ENCODE measurements at regions of chr7 and their contacts with region 1.

Region 1: DNA sequence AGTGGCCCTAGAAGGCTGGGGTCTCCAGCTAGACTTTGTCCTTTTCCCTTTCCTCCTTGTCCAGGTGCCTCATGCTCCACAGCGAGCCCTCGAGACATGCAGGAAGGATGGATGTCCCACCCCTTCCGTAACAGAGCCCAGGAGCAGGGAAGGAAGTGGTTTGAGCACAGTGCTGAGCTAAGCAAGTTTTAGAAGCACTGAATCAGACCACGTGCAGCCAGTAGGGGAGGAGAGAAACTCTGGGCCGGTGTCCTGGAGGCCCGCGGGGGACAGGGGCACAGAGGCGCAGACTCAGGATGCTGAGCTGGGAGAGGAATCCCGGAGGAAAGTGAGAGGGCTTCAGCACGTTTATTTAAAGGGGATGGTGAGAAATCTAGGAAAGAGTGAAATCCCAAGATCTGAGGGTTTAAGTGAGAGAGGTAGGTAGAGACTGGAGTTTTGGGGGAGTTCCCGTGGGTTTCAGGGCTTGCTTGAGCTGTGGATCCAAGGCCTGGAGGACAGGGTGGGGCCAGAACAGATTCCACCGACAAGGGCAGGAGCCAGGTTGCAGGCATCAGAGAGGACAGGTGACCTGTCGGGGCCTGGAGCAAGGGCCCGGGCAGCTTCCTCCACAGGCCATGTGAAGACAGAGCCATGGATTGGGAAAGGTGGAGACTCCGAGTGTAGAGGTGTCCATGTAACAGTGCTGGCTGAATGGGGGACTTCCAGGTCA is 4.4 kb upstream of the IRF5 start:
- DNase-seq: peak; percentile 75
- H3K4me3 Mint-ChIP-seq: peak overlapping the region; percentile 70
- H3K27ac Mint-ChIP-seq: peak overlapping the region; percentile 77
- H3K4me1 Mint-ChIP-seq: peaks cover 26% of the 10 kb centered on the region
- H3K27me3 Mint-ChIP-seq: peaks cover 6% of the 10 kb centered on the region

Region 2: GRCh38 chr7:128830231-128831177 is 102.8 kb before region 1 on chr7 and contains the start of gene FLNC:
- CTCF ChIA-PET with region 1: no interaction called
- POLR2A ChIA-PET with region 1: no interaction called
- intact Hi-C with region 1: no loop called
- DNase-seq: peak; percentile 51
- H3K4me3 Mint-ChIP-seq: peak within 1 kb of the TSS; percentile 45
- H3K27ac Mint-ChIP-seq: no peak within 1 kb of the TSS
- H3K4me1 Mint-ChIP-seq: peaks cover 11% of the 10 kb centered on the region
- H3K27me3 Mint-ChIP-seq: peaks cover 38% of the 10 kb centered on the region
- total RNA-seq, gene FLNC: 0.05 TPM in 1 of 2 experiments, not detected in the other

Region 3: GRCh38 chr7:128946923-128947830 is 13.8 kb after region 1 on chr7:
- CTCF ChIA-PET with region 1: interaction called, 12 read pairs
- POLR2A ChIA-PET with region 1: interaction called, 4 read pairs
- intact Hi-C with region 1: no loop called
- DNase-seq: no peak
- H3K4me3 Mint-ChIP-seq: no peak overlapping the region
- H3K27ac Mint-ChIP-seq: no peak overlapping the region
- H3K4me1 Mint-ChIP-seq: no peaks in the 10 kb centered on the region
- H3K27me3 Mint-ChIP-seq: no peaks in the 10 kb centered on the region